CD8-positive, alpha-beta T cell (primary cell): ENCODE measurements at regions of chr2 and their contacts with region 1.

Region 1: DNA sequence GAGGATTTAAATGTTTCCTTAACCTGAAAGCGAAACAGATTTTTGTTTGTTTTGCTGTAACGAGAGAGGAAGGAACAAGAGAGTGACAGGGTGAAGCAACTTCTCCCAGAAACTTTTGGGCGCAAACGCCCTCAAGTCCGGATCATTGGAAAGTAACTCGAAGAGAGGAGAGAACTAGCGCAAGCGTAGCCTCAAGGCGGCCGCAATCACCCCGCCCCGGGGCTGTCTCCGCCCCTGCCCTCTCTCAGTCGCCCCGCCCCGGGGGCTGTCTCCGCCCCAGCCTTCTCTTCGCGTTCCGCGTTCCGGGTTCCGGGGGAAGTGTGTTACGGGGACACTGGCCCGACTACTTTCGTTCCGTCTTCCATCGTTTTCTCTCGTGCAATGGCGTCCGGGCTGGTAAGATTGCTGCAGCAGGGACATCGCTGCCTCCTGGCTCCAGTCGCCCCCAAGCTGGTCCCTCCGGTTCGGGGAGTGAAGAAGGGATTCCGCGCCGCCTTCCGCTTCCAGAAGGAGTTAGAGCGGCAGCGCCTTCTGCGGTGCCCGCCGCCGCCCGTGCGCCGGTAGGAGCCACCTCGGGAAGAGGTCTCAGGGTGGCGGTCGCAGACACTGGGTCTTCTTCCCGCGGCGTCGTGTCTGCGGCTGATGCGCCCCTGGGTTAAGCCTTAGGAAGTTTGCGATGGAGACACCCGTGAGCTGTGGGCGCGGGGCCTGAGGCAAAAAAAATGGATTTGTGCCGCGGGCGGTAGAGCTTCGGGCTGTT is at the start of gene MRPL44:
- DNase-seq: peak; percentile 94 to 99 (median 96)
- ATAC-seq: peak; percentile 99
- H3K4me3 ChIP-seq: peak within 1 kb of the TSS; percentile 90 to 93
- H3K4me3 Mint-ChIP-seq: peak within 1 kb of the TSS; percentile 94
- H3K27ac ChIP-seq: peak within 1 kb of the TSS; percentile 75 to 78
- H3K27ac Mint-ChIP-seq: peak within 1 kb of the TSS; percentile 94
- H3K4me1 ChIP-seq: peaks cover 41% of the 10 kb centered on the region
- H3K4me1 Mint-ChIP-seq: peaks cover 50% of the 10 kb centered on the region
- H3K27me3 ChIP-seq: no peaks in the 10 kb centered on the region
- H3K27me3 Mint-ChIP-seq: no peaks in the 10 kb centered on the region
- CTCF ChIP-seq: no peak
- total RNA-seq, gene MRPL44: 41.4 to 41.9 TPM

Region 2: DNA sequence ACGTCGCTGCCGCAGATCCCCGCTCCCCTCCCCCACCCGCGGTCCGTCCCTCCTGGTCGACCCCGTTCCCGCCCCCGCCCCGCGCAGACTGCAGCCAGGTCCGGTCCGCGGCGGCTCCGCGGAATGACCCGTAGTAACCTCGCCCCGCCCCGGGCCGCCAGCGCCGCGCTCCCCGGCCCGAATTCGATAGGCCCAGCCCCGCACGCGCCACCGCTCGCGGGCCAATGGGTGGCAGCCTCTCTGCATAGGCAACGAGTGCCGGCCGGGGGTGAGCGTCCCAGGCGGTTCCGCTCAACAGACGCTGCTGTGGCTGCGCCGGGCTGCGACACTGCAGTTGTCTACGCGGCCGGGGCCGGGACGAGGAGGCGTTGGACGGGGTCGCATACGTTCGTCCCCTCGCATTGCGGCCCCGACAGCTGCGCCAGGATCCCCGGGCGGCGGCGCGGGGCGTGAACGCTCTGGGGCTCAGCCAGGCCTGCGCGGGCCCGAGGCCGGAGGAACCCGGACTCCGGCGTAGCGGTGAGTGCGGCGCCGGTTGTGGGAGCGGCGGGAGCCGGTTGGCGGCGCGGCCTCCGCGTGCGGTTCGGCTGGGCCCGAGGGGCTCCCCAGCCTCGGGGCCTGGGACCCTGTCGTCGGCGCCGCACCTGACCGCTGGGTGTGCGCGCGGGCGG is 1096.4 kb before region 1 on chr2 and contains the start of gene ACSL3:
- CTCF ChIA-PET with region 1: no interaction called
- POLR2A ChIA-PET with region 1: no interaction called
- intact Hi-C with region 1: loop called (anchors 5 to 10 kb)
- DNase-seq: peak; percentile 83 to 93 (median 92)
- ATAC-seq: peak; percentile 96
- H3K4me3 ChIP-seq: peak within 1 kb of the TSS; percentile 64 to 69
- H3K4me3 Mint-ChIP-seq: peak within 1 kb of the TSS; percentile 82
- H3K27ac ChIP-seq: peak within 1 kb of the TSS; percentile 69 to 80
- H3K27ac Mint-ChIP-seq: peak within 1 kb of the TSS; percentile 91
- H3K4me1 ChIP-seq: peaks cover 25% of the 10 kb centered on the region
- H3K4me1 Mint-ChIP-seq: peaks cover 7% of the 10 kb centered on the region
- H3K27me3 ChIP-seq: no peaks in the 10 kb centered on the region
- H3K27me3 Mint-ChIP-seq: no peaks in the 10 kb centered on the region
- CTCF ChIP-seq: no peak
- total RNA-seq, gene ACSL3: 89.5 to 97.6 TPM

Region 3: DNA sequence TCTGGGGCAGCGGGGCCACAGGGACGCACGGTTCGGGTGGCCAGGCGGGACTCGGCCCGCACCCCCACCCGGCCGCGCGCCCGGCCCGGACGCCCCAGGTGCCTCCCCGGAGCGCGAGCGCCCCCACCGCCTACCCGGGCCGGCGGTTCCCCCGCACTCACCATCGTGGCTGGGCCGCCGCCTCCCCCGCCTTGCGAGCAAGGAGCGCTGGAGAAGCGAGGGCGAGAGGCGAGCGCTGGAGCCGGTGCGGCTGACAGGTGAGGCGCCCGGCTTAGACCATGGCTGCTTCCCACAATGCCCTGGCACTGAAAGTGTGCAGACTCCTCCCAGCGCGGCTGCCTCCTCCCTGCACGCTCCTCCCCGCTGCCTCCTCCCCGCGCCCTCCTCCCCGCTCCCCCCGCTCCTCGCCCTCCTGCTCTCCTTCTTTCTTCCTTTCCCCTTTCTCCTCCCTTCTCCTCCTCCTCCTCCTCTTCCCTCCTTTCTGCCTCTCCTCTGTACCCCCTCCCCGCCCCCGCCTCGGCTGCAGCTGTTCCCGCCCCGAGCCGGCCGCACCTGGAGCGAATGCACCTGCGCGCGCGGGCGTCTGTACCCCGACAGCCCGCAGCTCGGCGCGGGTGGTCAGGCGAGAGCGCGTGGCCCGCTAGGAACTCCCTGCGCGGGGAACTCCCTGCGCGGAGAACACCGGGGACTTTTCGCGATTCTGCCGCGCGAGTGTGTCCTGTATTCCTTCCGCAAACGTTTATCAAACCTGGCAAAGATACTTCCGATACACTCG is 119.8 kb before region 1 on chr2 and contains the start of gene AP1S3:
- CTCF ChIA-PET with region 1: no interaction called
- POLR2A ChIA-PET with region 1: no interaction called
- intact Hi-C with region 1: loop called (anchors 2 kb)
- DNase-seq: peak; percentile 34 to 91 (median 67)
- ATAC-seq: peak; percentile 90
- H3K4me3 ChIP-seq: peak within 1 kb of the TSS; percentile 65 to 85
- H3K4me3 Mint-ChIP-seq: peak within 1 kb of the TSS; percentile 96
- H3K27ac ChIP-seq: peak within 1 kb of the TSS in 1 of 2 experiments; percentile 15
- H3K27ac Mint-ChIP-seq: peak within 1 kb of the TSS; percentile 85
- H3K4me1 ChIP-seq: peaks cover 7% of the 10 kb centered on the region
- H3K4me1 Mint-ChIP-seq: peaks cover 11% of the 10 kb centered on the region
- H3K27me3 ChIP-seq: no peaks in the 10 kb centered on the region
- H3K27me3 Mint-ChIP-seq: peaks cover 6% of the 10 kb centered on the region
- CTCF ChIP-seq: no peak
- total RNA-seq, gene AP1S3: 0.76 to 1.2 TPM

Region 4: GRCh38 chr2:223944703-223945531 is 12.4 kb before region 1 on chr2 and contains the start of gene WDFY1:
- CTCF ChIA-PET with region 1: interaction called, 8 read pairs
- POLR2A ChIA-PET with region 1: interaction called, 18 read pairs
- intact Hi-C with region 1: loop called (anchors 1 kb)
- DNase-seq: peak; percentile 59 to 88 (median 79)
- ATAC-seq: peak; percentile 82
- H3K4me3 ChIP-seq: peak within 1 kb of the TSS; percentile 83 to 86
- H3K4me3 Mint-ChIP-seq: peak within 1 kb of the TSS; percentile 92
- H3K27ac ChIP-seq: peak within 1 kb of the TSS; percentile 62 to 63
- H3K27ac Mint-ChIP-seq: peak within 1 kb of the TSS; percentile 85
- H3K4me1 ChIP-seq: peaks cover 30% of the 10 kb centered on the region
- H3K4me1 Mint-ChIP-seq: peaks cover 43% of the 10 kb centered on the region
- H3K27me3 ChIP-seq: no peaks in the 10 kb centered on the region
- H3K27me3 Mint-ChIP-seq: no peaks in the 10 kb centered on the region
- CTCF ChIP-seq: no peak
- total RNA-seq, gene WDFY1: 38.6 to 42.6 TPM

Region 5: GRCh38 chr2:224039124-224039940 is 82.1 kb after region 1 on chr2 and contains the start of gene SERPINE2:
- CTCF ChIA-PET with region 1: no interaction called
- POLR2A ChIA-PET with region 1: no interaction called
- intact Hi-C with region 1: loop called in 1 of 2 experiments (anchors 2 kb)
- DNase-seq: peak in 8 of 9 experiments; percentile 19 to 74 (median 52)
- ATAC-seq: peak; percentile 67
- H3K4me3 ChIP-seq: peak within 1 kb of the TSS; percentile 39 to 41
- H3K4me3 Mint-ChIP-seq: peak within 1 kb of the TSS; percentile 97
- H3K27ac ChIP-seq: no peak within 1 kb of the TSS
- H3K27ac Mint-ChIP-seq: peak within 1 kb of the TSS; percentile 65
- H3K4me1 ChIP-seq: peaks cover 11% of the 10 kb centered on the region
- H3K4me1 Mint-ChIP-seq: peaks cover 24% of the 10 kb centered on the region
- H3K27me3 ChIP-seq: peaks cover 0 to 2% of the 10 kb centered on the region in 2 experiments
- H3K27me3 Mint-ChIP-seq: peaks cover 42% of the 10 kb centered on the region
- CTCF ChIP-seq: no peak
- total RNA-seq, gene SERPINE2: 2.8 to 4.8 TPM

Region 6: GRCh38 chr2:224778474-224778877 is 821.2 kb after region 1 on chr2:
- CTCF ChIA-PET with region 1: no interaction called
- POLR2A ChIA-PET with region 1: no interaction called
- intact Hi-C with region 1: loop called in 1 of 2 experiments (anchors 10 kb)
- DNase-seq: peak; percentile 29 to 70 (median 55)
- ATAC-seq: peak; percentile 63
- H3K4me3 ChIP-seq: no peak overlapping the region
- H3K4me3 Mint-ChIP-seq: no peak overlapping the region
- H3K27ac ChIP-seq: no peak overlapping the region
- H3K27ac Mint-ChIP-seq: no peak overlapping the region
- H3K4me1 ChIP-seq: no peaks in the 10 kb centered on the region
- H3K4me1 Mint-ChIP-seq: peaks cover 5% of the 10 kb centered on the region
- H3K27me3 ChIP-seq: no peaks in the 10 kb centered on the region
- H3K27me3 Mint-ChIP-seq: no peaks in the 10 kb centered on the region
- CTCF ChIP-seq: peak; percentile 89